SK-N-SH (cell line): ENCODE measurements at regions of chr13 and their contacts with region 1.

Region 1: GRCh38 chr13:98445340-98446233 is 131.3 kb downstream of the STK24 start:
- DNase-seq: peak; percentile 92
- H3K4me3 ChIP-seq: no peak overlapping the region; a peak in 1 of 4 replicates
- H3K27ac ChIP-seq: no peak overlapping the region; a peak in 1 of 4 replicates
- H3K4me1 ChIP-seq: peaks cover 3 to 11% of the 10 kb centered on the region in 2 experiments; a peak in 2 of 4 replicates
- H3K27me3 ChIP-seq: no peaks in the 10 kb centered on the region
- CTCF ChIP-seq: peak; percentile 87
- EP300 ChIP-seq: no peak
- RAD21 ChIP-seq: peak; percentile 89

Region 2: GRCh38 chr13:98033277-98034247 is 412.0 kb before region 1 on chr13:
- CTCF ChIA-PET with region 1: interaction called, 10 read pairs
- POLR2A ChIA-PET with region 1: interaction called, 3 read pairs
- DNase-seq: peak; percentile 39
- H3K4me3 ChIP-seq: no peak overlapping the region
- H3K27ac ChIP-seq: no peak overlapping the region
- H3K4me1 ChIP-seq: peaks cover 2 to 7% of the 10 kb centered on the region in 2 experiments; a peak in 2 of 4 replicates
- H3K27me3 ChIP-seq: no peaks in the 10 kb centered on the region
- CTCF ChIP-seq: peak; percentile 49
- EP300 ChIP-seq: no peak
- RAD21 ChIP-seq: peak; percentile 70

Region 3: DNA sequence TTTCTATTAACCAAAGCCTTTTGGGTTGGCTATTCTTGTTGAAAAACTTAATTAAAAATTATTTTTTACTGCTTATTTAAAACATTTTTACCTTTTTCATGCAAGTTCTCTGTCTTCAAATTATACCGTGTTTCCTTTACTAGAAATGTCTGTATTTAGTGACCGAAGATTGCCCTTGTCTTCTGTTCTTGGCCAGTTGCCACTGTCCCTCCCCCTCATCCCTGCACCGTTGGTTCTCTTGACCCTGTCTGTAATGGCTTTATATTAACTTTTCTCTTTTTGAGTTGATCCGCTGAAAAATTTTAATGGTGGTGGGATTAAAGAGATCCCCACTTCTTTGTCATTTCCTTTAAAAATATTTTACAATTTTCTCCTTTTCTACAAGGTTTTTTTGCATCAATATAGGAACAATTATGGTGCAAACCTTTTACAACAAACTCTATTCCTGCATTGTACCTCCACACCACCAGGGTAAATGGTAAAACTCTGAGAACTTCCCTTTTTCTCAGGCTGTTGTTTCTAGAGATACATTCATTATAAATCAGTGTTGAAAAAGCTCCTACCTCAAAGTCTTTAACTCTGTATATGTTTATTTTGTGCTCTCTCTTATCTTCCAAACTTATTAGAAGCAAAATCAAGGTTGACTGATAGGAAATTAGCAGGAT is 255.6 kb before region 1 on chr13:
- CTCF ChIA-PET with region 1: no interaction called
- POLR2A ChIA-PET with region 1: no interaction called
- DNase-seq: peak; percentile 52
- H3K4me3 ChIP-seq: no peak overlapping the region
- H3K27ac ChIP-seq: peak overlapping the region in 1 of 2 experiments; percentile 8; a peak in 1 of 4 replicates
- H3K4me1 ChIP-seq: peaks cover 6 to 22% of the 10 kb centered on the region in 2 experiments; a peak in 3 of 4 replicates
- H3K27me3 ChIP-seq: no peaks in the 10 kb centered on the region
- CTCF ChIP-seq: no peak
- EP300 ChIP-seq: no peak
- RAD21 ChIP-seq: no peak

Region 4: DNA sequence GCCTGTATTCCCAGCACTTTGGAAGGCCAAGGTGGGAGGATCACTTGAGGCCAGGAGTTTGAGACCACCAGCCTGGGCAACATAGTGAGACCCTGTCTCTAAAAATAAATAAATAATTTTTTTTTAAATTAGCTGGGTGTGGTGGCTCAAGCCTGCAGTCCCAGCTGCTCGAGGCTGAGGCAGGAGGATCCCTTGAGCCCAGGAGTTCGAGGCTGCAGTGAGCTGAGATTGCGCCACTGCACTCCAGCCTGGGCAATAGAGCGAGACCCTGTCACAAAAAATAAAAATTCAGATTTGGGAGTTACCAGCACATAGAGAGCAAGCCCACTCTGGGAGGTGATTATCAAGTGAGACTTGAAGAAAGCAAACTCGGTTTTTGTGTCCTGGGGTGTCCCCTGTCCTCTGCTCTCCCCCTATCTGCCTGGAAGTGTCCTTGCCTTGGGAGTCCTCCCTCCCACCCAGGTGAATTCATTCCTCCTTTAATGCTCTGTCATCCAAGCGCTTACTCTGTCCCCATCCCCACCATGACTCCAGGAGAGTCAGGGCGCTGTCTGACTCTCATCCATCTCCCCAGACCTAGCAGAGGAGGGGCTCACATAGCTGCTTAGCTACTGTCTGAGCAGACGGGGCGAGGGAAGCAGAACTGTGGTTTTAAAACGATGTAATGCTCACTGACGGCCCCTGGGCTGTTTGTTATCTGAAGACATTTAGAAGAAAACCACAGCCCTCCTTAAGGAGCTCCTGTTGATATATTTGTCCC is 15.4 kb before region 1 on chr13:
- CTCF ChIA-PET with region 1: interaction called, 47 read pairs
- POLR2A ChIA-PET with region 1: no interaction called
- DNase-seq: no peak
- H3K4me3 ChIP-seq: no peak overlapping the region
- H3K27ac ChIP-seq: no peak overlapping the region
- H3K4me1 ChIP-seq: no peaks in the 10 kb centered on the region
- H3K27me3 ChIP-seq: no peaks in the 10 kb centered on the region
- CTCF ChIP-seq: no peak
- EP300 ChIP-seq: no peak
- RAD21 ChIP-seq: no peak

Region 5: GRCh38 chr13:98471934-98472333 is 26.3 kb after region 1 on chr13:
- CTCF ChIA-PET with region 1: interaction called, 27 read pairs
- POLR2A ChIA-PET with region 1: no interaction called
- DNase-seq: no peak
- H3K4me3 ChIP-seq: no peak overlapping the region
- H3K27ac ChIP-seq: no peak overlapping the region; a peak in 1 of 4 replicates
- H3K4me1 ChIP-seq: peaks cover 8 to 26% of the 10 kb centered on the region in 2 experiments; a peak in 2 of 4 replicates
- H3K27me3 ChIP-seq: no peaks in the 10 kb centered on the region
- CTCF ChIP-seq: no peak
- EP300 ChIP-seq: no peak
- RAD21 ChIP-seq: no peak

Region 6: GRCh38 chr13:98664039-98664438 is 218.5 kb after region 1 on chr13:
- CTCF ChIA-PET with region 1: interaction called, 18 read pairs
- POLR2A ChIA-PET with region 1: no interaction called
- DNase-seq: no peak
- H3K4me3 ChIP-seq: no peak overlapping the region
- H3K27ac ChIP-seq: no peak overlapping the region
- H3K4me1 ChIP-seq: peaks cover 0 to 9% of the 10 kb centered on the region in 2 experiments; a peak in 1 of 4 replicates
- H3K27me3 ChIP-seq: no peaks in the 10 kb centered on the region; the same call in none of the 2 replicates
- CTCF ChIP-seq: no peak
- EP300 ChIP-seq: no peak
- RAD21 ChIP-seq: no peak

Region 7: GRCh38 chr13:98842864-98843481 is 397.4 kb after region 1 on chr13:
- CTCF ChIA-PET with region 1: interaction called, 17 read pairs
- POLR2A ChIA-PET with region 1: no interaction called
- DNase-seq: peak; percentile 72
- H3K4me3 ChIP-seq: no peak overlapping the region; a peak in 1 of 4 replicates
- H3K27ac ChIP-seq: no peak overlapping the region
- H3K4me1 ChIP-seq: peaks cover 6 to 7% of the 10 kb centered on the region in 2 experiments; a peak in 2 of 4 replicates
- H3K27me3 ChIP-seq: no peaks in the 10 kb centered on the region
- CTCF ChIP-seq: peak; percentile 91
- EP300 ChIP-seq: no peak
- RAD21 ChIP-seq: peak; percentile 97